Psoas muscle (tissue), 8 donors: ENCODE measurements at regions of chr6 and their contacts with region 1.

Region 1: GRCh38 chr6:46221222-46221793 is 50.5 kb upstream of the ENPP5 start:
- DNase-seq: no peak
- ATAC-seq: peak; percentile 59 to 79 (median 70)
- H3K4me3 ChIP-seq: no peak overlapping the region
- H3K27ac ChIP-seq: no peak overlapping the region
- H3K4me1 ChIP-seq: no peaks in the 10 kb centered on the region
- H3K27me3 ChIP-seq: no peaks in the 10 kb centered on the region
- CTCF ChIP-seq: peak; percentile 85

Region 2: GRCh38 chr6:46263707-46264086 is 42.4 kb after region 1 on chr6:
- intact Hi-C with region 1: no loop called
- DNase-seq: no peak
- ATAC-seq: peak in 2 of 4 donors; percentile 49 to 60
- H3K4me3 ChIP-seq: no peak overlapping the region
- H3K27ac ChIP-seq: no peak overlapping the region
- H3K4me1 ChIP-seq: peaks cover 3% of the 10 kb centered on the region
- H3K27me3 ChIP-seq: no peaks in the 10 kb centered on the region
- CTCF ChIP-seq: no peak

Region 3: DNA sequence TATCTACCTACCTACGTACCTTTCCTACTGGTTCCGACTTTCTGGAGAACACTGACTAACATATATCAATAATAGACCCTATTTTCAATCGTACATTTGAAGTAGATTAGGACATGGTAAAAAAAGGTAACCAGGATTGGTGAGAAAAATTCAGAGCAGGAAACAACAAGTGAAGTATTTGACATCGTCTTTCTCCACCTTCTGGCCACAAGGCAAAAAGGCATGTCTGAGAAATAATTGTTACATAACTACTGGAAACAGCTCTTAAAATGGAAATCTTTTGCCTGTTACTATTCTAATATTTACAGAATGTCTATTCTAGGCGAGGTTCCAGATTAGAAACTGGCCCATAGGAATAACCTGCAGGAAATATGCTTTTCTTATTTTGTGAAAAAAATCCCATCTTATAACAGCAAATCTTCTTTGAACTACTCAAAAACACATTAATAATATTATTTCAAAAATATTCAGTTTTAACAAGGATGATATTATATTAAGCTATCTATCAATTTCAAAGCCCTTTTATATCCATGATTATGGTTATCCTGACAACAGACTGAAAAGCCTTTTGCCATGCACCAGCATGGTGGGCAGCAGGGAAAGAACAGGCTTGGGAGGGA is 189.1 kb after region 1 on chr6:
- intact Hi-C with region 1: loop called (anchors 2 kb)
- DNase-seq: no peak
- ATAC-seq: peak in 3 of 4 donors; percentile 55 to 70 (median 64)
- H3K4me3 ChIP-seq: no peak overlapping the region
- H3K27ac ChIP-seq: no peak overlapping the region
- H3K4me1 ChIP-seq: peaks cover 19% of the 10 kb centered on the region
- H3K27me3 ChIP-seq: no peaks in the 10 kb centered on the region
- CTCF ChIP-seq: peak; percentile 65

Region 4: DNA sequence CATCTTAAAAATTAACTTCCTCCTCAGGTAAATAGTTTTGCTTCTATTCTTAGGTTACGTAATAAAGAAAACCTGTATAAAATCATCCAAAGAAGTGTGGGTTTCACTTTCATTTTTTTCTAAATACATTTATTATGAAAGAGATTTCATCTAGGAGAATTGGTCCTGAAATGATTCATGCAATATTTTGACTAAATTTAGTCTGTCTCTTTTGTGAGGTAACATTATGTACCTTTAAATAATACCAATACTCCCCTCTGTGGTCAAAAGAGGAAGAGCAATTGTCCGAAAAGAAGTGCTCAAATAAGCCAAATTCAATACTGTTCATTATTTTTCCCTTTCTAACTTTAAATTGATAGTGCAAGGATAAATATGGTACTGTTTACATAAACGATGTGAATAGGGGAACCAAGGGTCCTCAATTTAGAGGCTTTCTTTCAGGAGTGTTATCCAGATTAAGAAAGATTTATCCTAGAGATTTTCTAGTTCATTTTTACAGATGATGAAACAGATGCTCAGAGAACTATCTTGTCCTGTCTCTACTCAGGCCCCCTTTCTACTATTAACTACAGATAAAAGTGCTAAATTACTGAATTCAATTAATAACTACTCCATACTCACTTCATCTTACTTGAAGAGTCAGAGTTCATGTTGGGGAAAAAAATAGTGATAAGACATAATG is 405.1 kb after region 1 on chr6:
- intact Hi-C with region 1: loop called (anchors 5 to 10 kb)
- DNase-seq: no peak
- ATAC-seq: peak in 2 of 4 donors; percentile 59 to 79
- H3K4me3 ChIP-seq: no peak overlapping the region
- H3K27ac ChIP-seq: no peak overlapping the region
- H3K4me1 ChIP-seq: no peaks in the 10 kb centered on the region
- H3K27me3 ChIP-seq: no peaks in the 10 kb centered on the region
- CTCF ChIP-seq: peak; percentile 73

Region 5: DNA sequence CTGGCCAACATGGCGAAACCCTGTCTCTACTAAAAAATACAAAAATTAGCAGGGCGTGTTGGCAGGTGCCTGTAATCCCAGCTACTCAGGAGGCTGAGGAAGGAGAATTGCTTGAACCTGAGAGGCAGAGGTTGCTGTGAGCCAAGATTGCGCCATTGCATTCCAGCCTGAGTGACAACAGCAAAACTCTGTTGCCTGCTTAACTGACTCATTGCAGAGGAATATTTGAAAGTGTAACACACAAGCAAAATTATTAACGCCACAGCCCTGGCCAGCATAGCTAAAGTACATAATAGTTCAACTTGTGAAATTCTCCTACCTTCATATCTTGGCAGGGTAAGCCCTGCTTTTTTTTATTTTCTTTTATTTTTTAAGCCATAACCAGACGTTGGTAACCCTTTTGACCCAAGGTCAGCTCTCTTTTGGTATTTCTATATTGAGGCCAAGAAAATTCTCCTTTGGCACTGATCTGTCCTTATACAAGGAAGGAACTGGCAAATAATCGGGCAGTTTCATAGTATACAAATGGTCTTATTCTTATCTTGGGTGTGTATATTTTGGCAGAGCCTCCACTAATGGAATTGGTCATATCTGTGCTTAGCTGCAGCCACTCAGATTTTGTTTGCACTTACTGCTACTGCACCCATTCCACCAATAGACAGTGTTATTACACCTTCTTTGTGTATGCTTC is 704.4 kb after region 1 on chr6:
- intact Hi-C with region 1: no loop called
- DNase-seq: peak in 1 of 2 donors; percentile 38
- ATAC-seq: peak in 3 of 4 donors; percentile 54 to 80 (median 68)
- H3K4me3 ChIP-seq: no peak overlapping the region
- H3K27ac ChIP-seq: no peak overlapping the region
- H3K4me1 ChIP-seq: no peaks in the 10 kb centered on the region
- H3K27me3 ChIP-seq: no peaks in the 10 kb centered on the region
- CTCF ChIP-seq: no peak